Natural killer cell (primary cell): ENCODE measurements at regions of chr11 and their contacts with region 1.

Region 1: DNA sequence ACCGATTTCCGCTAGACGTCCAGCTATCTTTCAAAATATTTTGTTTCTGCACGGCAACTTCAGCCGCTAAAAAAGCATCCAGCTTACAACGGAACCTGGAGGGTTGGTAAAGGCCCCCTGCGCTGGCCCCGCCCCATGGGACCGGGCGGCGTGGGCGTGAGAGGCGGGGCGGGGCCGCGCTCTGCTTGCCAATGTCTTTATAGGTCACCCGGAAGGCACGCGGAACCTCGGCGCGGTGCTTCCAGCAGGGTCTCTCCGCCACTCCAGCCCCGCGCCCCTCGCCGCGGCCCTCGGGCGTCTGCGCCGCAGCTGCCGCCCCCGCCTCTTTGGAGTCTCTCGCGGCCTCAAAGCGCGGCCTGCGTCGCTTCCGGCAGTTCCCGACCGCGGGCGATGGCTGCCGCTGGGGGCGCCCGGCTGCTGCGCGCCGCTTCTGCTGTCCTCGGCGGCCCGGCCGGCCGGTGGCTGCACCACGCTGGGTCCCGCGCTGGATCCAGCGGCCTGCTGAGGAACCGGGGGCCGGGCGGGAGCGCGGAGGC is at the start of gene FDX1:
- DNase-seq: peak; percentile 81 to 88
- ATAC-seq: peak; percentile 83 to 92 (median 84)
- H3K4me3 ChIP-seq: peak within 1 kb of the TSS; percentile 92
- H3K4me3 Mint-ChIP-seq: peak within 1 kb of the TSS; percentile 99
- H3K27ac ChIP-seq: peak within 1 kb of the TSS; percentile 85
- H3K27ac Mint-ChIP-seq: peak within 1 kb of the TSS; percentile 96 to 98
- H3K4me1 ChIP-seq: peaks cover 14% of the 10 kb centered on the region
- H3K4me1 Mint-ChIP-seq: peaks cover 36 to 41% of the 10 kb centered on the region in 2 donors
- H3K27me3 ChIP-seq: no peaks in the 10 kb centered on the region
- H3K27me3 Mint-ChIP-seq: no peaks in the 10 kb centered on the region
- CTCF ChIP-seq: peak; percentile 72
- total RNA-seq, gene FDX1: 6.7 to 7.9 (median 7.8) TPM

Region 2: GRCh38 chr11:109680127-109680526 is 749.7 kb before region 1 on chr11:
- intact Hi-C with region 1: no loop called
- DNase-seq: no peak
- ATAC-seq: no peak
- H3K4me3 ChIP-seq: no peak overlapping the region
- H3K4me3 Mint-ChIP-seq: no peak overlapping the region
- H3K27ac ChIP-seq: no peak overlapping the region
- H3K27ac Mint-ChIP-seq: no peak overlapping the region
- H3K4me1 ChIP-seq: no peaks in the 10 kb centered on the region
- H3K4me1 Mint-ChIP-seq: no peaks in the 10 kb centered on the region
- H3K27me3 ChIP-seq: no peaks in the 10 kb centered on the region
- H3K27me3 Mint-ChIP-seq: no peaks in the 10 kb centered on the region
- CTCF ChIP-seq: no peak

Region 3: GRCh38 chr11:109946322-109946846 is 483.4 kb before region 1 on chr11:
- intact Hi-C with region 1: loop called (anchors 5 kb)
- DNase-seq: peak; percentile 24 to 61
- ATAC-seq: peak; percentile 85 to 93 (median 85)
- H3K4me3 ChIP-seq: no peak overlapping the region
- H3K4me3 Mint-ChIP-seq: peak overlapping the region; percentile 57
- H3K27ac ChIP-seq: no peak overlapping the region
- H3K27ac Mint-ChIP-seq: peak overlapping the region in 1 of 2 donors; percentile 25
- H3K4me1 ChIP-seq: no peaks in the 10 kb centered on the region
- H3K4me1 Mint-ChIP-seq: peaks cover 8 to 11% of the 10 kb centered on the region in 2 donors
- H3K27me3 ChIP-seq: no peaks in the 10 kb centered on the region
- H3K27me3 Mint-ChIP-seq: peaks cover 8 to 16% of the 10 kb centered on the region in 2 donors
- CTCF ChIP-seq: peak; percentile 66

Region 4: GRCh38 chr11:110148775-110149744 is 280.7 kb before region 1 on chr11:
- intact Hi-C with region 1: no loop called
- DNase-seq: no peak
- ATAC-seq: peak in 1 of 3 donors; percentile 76
- H3K4me3 ChIP-seq: no peak overlapping the region
- H3K4me3 Mint-ChIP-seq: no peak overlapping the region
- H3K27ac ChIP-seq: no peak overlapping the region
- H3K27ac Mint-ChIP-seq: no peak overlapping the region
- H3K4me1 ChIP-seq: no peaks in the 10 kb centered on the region
- H3K4me1 Mint-ChIP-seq: no peaks in the 10 kb centered on the region
- H3K27me3 ChIP-seq: no peaks in the 10 kb centered on the region
- H3K27me3 Mint-ChIP-seq: peaks cover 0 to 5% of the 10 kb centered on the region in 2 donors
- CTCF ChIP-seq: no peak

Region 5: DNA sequence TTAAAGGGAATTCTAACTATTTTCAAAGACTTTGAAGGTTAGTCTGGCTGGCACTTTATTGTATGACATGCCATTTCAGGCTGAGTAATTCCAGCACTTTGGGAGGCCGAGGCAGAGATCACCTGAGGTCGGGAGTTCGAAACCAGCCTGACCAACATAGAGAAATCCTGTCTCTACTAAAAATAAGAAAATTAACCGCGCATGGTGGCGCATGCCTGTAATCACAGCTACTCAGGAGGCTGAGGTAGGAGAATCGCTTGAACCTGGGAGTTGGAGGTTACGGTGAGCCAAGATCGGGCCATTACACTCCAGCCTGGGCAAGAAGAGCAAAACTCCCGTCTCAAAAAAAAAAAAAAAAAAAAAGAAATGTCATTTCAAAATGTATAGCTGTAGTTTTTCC is 229.0 kb before region 1 on chr11:
- intact Hi-C with region 1: loop called (anchors 1 kb)
- DNase-seq: no peak
- ATAC-seq: no peak
- H3K4me3 ChIP-seq: no peak overlapping the region
- H3K4me3 Mint-ChIP-seq: no peak overlapping the region
- H3K27ac ChIP-seq: no peak overlapping the region
- H3K27ac Mint-ChIP-seq: no peak overlapping the region
- H3K4me1 ChIP-seq: no peaks in the 10 kb centered on the region
- H3K4me1 Mint-ChIP-seq: no peaks in the 10 kb centered on the region
- H3K27me3 ChIP-seq: no peaks in the 10 kb centered on the region
- H3K27me3 Mint-ChIP-seq: peaks cover 0 to 5% of the 10 kb centered on the region in 2 donors
- CTCF ChIP-seq: no peak

Region 6: GRCh38 chr11:110296226-110297075 is 133.3 kb before region 1 on chr11 and contains the start of gene RDX:
- intact Hi-C with region 1: loop called (anchors 5 kb)
- DNase-seq: peak; percentile 53 to 79
- ATAC-seq: peak; percentile 70 to 82 (median 81)
- H3K4me3 ChIP-seq: peak within 1 kb of the TSS; percentile 74
- H3K4me3 Mint-ChIP-seq: peak within 1 kb of the TSS; percentile 91
- H3K27ac ChIP-seq: peak within 1 kb of the TSS; percentile 40
- H3K27ac Mint-ChIP-seq: peak within 1 kb of the TSS; percentile 50 to 76
- H3K4me1 ChIP-seq: peaks cover 4% of the 10 kb centered on the region
- H3K4me1 Mint-ChIP-seq: peaks cover 13 to 15% of the 10 kb centered on the region in 2 donors
- H3K27me3 ChIP-seq: no peaks in the 10 kb centered on the region
- H3K27me3 Mint-ChIP-seq: no peaks in the 10 kb centered on the region
- CTCF ChIP-seq: no peak
- total RNA-seq, gene RDX: 22.6 to 31.1 (median 25.9) TPM

Region 7: DNA sequence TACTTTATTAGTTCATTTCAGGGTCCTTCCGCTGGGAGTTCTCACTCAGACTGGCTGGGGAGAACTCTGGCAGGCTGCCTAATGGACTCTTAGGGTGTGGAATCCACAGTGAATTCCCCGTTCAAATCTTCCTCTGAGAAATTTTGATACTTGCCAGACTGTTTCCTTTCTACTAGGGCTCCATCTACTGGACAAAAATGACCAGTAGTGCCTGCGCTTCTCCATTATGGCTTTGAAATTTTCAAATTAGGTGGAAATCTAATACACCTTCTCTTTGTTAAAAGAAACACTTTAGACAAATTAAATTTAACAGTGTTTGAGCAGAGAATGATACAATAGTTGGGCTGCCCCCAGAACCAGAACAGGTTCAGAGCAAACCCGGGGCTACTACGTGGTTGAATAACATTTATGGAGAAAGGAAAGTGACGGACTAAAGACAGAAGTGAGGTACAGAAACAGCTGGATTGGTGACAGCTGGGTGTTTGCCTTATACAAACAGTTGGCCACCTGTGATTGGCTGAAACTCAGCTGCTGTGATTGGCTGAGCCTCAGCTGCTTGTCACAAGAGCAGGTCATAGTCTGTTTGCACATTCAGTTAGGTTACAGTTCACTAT is 53.0 kb before region 1 on chr11:
- intact Hi-C with region 1: loop called (anchors 1 kb)
- DNase-seq: peak in 1 of 2 donors; percentile 71
- ATAC-seq: peak; percentile 59 to 70 (median 68)
- H3K4me3 ChIP-seq: no peak overlapping the region
- H3K4me3 Mint-ChIP-seq: no peak overlapping the region
- H3K27ac ChIP-seq: no peak overlapping the region
- H3K27ac Mint-ChIP-seq: no peak overlapping the region
- H3K4me1 ChIP-seq: no peaks in the 10 kb centered on the region
- H3K4me1 Mint-ChIP-seq: peaks cover 5 to 6% of the 10 kb centered on the region in 2 donors
- H3K27me3 ChIP-seq: no peaks in the 10 kb centered on the region
- H3K27me3 Mint-ChIP-seq: peaks cover 7 to 9% of the 10 kb centered on the region in 2 donors
- CTCF ChIP-seq: peak; percentile 61

Region 8: GRCh38 chr11:110497231-110497978 is 67.6 kb after region 1 on chr11:
- intact Hi-C with region 1: no loop called
- DNase-seq: no peak
- ATAC-seq: no peak
- H3K4me3 ChIP-seq: no peak overlapping the region
- H3K4me3 Mint-ChIP-seq: no peak overlapping the region
- H3K27ac ChIP-seq: no peak overlapping the region
- H3K27ac Mint-ChIP-seq: no peak overlapping the region
- H3K4me1 ChIP-seq: no peaks in the 10 kb centered on the region
- H3K4me1 Mint-ChIP-seq: no peaks in the 10 kb centered on the region
- H3K27me3 ChIP-seq: no peaks in the 10 kb centered on the region
- H3K27me3 Mint-ChIP-seq: peaks cover 3 to 18% of the 10 kb centered on the region in 2 donors
- CTCF ChIP-seq: no peak